MCF 10A (cell line): ENCODE measurements at regions of chr21 and their contacts with region 1.

Region 1: DNA sequence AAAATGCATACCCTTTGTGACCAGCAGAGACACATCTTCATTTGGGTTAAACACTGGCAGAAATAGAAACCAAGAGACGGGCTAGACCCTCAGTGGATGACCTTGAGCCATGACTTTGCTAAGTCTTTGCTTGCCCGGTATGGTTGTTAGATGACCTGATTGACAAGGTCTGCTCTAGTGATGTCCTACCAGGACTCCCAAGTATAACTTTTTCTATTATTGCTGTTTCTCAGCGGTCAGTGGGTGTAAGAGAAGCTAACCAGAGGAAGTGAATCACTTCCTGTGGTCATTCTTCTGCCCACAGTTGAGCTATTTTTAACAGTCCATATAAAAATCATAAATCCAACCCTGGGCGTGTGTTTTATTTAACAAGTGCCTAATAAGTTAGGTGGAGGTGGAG is 126.2 kb upstream of the ETS2 start:
- DNase-seq: peak; percentile 39
- H3K4me3 Mint-ChIP-seq: no peak overlapping the region
- H3K27ac Mint-ChIP-seq: no peak overlapping the region
- H3K4me1 Mint-ChIP-seq: peaks cover 11% of the 10 kb centered on the region
- H3K27me3 Mint-ChIP-seq: peaks cover 13% of the 10 kb centered on the region
- CTCF ChIP-seq: no peak

Region 2: DNA sequence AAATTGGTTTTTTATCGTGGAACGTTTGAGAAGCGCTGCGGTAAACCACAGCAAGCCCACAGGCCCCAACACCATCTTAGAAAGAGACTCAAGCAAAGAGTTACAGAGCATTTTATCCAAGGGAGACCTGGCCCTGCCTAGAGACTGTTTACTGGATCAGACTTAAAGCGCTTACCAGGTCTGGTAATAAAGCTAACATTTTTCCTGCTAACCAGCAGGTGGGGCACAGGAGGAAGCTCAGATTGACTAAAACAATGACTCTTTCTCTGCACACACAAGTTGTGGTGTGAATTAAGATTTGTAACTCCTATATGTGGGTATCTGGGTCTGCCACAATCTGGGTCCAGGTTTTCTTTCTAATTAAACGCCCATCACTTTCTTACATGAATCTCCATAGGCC is 10.4 kb before region 1 on chr21:
- CTCF ChIA-PET with region 1: interaction called, 28 read pairs
- POLR2A ChIA-PET with region 1: interaction called, 3 read pairs
- intact Hi-C with region 1: no loop called
- DNase-seq: peak; percentile 48
- H3K4me3 Mint-ChIP-seq: no peak overlapping the region
- H3K27ac Mint-ChIP-seq: no peak overlapping the region
- H3K4me1 Mint-ChIP-seq: no peaks in the 10 kb centered on the region
- H3K27me3 Mint-ChIP-seq: peaks cover 35% of the 10 kb centered on the region
- CTCF ChIP-seq: peak; percentile 48